ENCODE measurements at regions of chr4 and their contacts with region 1.

Region 1: DNA sequence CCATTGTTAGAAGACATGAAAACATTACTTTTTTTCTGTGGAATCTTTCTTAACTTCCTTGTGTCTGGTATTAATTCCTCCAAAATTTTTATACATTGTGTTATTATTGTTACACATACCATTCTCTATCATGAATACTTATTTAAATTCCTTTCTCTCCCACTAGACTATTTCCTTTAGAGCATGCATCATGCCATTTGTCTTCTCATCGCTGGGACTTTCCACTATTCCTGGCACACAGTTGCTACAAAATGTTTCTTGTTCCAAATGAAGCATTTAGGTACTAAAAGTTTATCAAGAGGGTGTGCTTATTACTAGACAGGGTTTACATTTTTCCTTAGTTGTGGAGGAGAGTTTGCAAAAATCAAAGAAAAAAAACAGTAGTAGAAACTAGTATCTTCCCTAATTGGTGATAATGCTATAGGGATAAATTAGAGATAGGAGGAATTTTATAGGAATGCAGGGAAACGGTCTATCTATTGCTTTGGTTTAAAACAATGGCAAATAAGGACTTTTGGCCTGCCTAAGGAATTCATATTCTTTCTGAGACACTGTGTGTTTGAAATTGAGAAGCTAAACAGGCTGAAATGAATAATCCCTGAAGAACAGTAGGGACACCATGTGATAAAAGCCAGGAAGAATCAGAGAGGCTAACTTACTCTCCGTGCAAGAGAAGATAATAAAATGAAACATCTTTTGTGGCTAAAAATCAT is 187.5 kb upstream of the TBC1D9 start:
- DNase-seq: no peak

Region 2: DNA sequence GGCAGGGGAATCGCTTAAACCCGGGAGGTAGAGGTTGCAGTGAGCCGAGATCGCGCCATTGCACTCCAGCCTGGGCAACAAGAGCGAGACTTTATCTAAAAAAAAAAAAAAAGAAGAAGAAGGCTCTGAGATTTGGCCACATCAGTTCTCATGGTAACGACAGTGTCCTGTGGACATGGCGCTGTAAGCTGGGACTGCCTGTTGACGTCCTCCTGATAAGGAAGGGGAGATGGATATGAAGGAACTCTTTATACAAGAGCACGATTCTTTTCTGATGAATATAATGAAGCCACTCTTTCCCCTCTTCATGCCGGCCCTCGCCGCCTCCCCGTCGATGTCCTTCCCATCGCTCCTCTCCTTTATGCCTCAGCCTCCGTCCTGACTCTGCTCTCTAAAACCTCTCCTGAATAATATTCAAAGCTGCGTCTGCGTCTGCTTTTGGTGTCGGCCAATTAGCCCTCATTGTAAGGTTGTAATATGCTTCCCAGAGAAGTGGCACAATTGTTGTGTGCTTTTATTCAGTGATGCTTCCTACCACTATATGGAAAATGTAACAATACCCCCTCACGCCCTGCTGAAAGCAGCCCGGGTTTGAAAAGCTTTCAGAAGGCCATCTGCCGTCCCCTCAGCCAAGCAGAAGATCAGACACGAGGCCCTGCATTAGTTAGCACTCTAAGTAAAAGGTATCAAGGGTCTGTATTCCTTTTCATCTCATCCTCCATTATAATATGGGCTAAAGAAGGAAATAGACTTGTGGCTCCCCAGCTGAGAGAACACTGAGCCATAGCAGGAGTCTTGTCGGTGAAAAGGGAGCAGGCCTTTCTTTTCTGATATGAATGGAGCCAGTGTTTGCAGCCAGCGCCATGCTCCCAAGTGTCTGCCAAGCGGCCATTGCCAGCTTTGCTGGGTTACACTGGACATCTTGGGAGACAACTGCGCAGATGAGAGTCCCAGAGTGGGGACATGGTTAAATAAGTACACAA is 592.3 kb before region 1 on chr4:
- intact Hi-C with region 1: no loop called
- DNase-seq: no peak

Region 3: DNA sequence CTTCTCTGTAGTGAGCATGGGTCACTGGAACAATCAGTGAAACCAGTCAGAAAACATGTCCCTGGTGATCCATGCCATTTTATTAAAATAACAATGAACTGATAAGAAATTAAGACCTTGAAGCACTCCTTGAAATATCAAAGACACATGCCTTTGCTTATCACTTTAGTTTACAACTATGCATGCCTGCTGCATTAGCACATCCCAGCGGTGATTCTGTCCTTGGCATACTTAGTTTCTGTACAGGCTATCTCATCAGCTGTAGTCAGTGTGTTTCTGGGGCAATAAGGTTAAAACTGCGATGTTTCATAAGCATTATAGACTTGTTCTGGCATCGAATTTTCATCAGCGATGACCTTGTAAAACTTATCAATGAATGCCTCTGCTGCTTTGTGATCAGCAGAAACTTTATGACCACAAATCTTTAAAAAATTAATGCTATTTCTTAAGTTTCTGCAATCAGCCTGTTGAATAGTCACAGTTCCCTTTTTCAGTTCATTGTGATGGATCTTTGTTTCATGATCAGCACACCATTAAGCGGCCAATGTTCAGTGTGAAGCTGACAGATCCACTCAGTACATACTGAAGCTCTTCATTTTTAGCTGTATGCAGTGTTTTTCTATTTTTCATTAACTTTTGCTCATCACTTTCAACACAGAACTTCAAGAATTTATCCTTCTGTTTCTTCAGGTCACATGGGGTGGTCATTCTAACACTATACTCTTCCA is 39.1 kb after region 1 on chr4:
- intact Hi-C with region 1: loop called (anchors 5 kb)
- DNase-seq: no peak